IMR-90 (cell line): ENCODE measurements at regions of chr3 and their contacts with region 1.

Region 1: GRCh38 chr3:136270179-136270578 is 20.0 kb downstream of the PCCB start:
- DNase-seq: no peak
- ATAC-seq: no peak
- H3K4me3 ChIP-seq: no peak overlapping the region
- H3K27ac ChIP-seq: no peak overlapping the region
- H3K4me1 ChIP-seq: peaks cover 3% of the 10 kb centered on the region; the same call in 1 of the 2 replicates
- H3K27me3 ChIP-seq: no peaks in the 10 kb centered on the region
- CTCF ChIP-seq: no peak
- POLR2A ChIP-seq: no peak
- RAD21 ChIP-seq: no peak

Region 2: GRCh38 chr3:136162322-136162721 is 107.9 kb before region 1 on chr3:
- CTCF ChIA-PET with region 1: no interaction called
- POLR2A ChIA-PET with region 1: interaction called, 13 read pairs
- dilution Hi-C with region 1: no loop called
- in situ Hi-C with region 1: no loop called
- intact Hi-C with region 1: no loop called
- DNase-seq: no peak
- ATAC-seq: no peak
- H3K4me3 ChIP-seq: no peak overlapping the region
- H3K27ac ChIP-seq: no peak overlapping the region
- H3K4me1 ChIP-seq: no peaks in the 10 kb centered on the region; the same call in 1 of the 2 replicates
- H3K27me3 ChIP-seq: no peaks in the 10 kb centered on the region
- CTCF ChIP-seq: no peak
- POLR2A ChIP-seq: no peak
- RAD21 ChIP-seq: no peak